ENCODE measurements at regions of chr11 and their contacts with region 1.

Region 1: GRCh38 chr11:35617687-35618496 is at the start of gene FJX1:
- DNase-seq: peak; percentile 17
- H3K4me3 ChIP-seq: peak within 1 kb of the TSS; percentile 44 to 52 (median 48)
- H3K27ac ChIP-seq: peak within 1 kb of the TSS; percentile 53 to 82 (median 72)
- H3K4me1 ChIP-seq: peaks cover 11 to 35% (median 21%) of the 10 kb centered on the region in 4 donors
- H3K27me3 ChIP-seq: peaks cover 82% of the 10 kb centered on the region
- CTCF ChIP-seq: no peak
- EP300 ChIP-seq: no peak
- POLR2A ChIP-seq: no peak
- total RNA-seq, gene FJX1: 0.14 to 2.6 (median 0.64) TPM in 3 of 4 donors, not detected in the other

Region 2: DNA sequence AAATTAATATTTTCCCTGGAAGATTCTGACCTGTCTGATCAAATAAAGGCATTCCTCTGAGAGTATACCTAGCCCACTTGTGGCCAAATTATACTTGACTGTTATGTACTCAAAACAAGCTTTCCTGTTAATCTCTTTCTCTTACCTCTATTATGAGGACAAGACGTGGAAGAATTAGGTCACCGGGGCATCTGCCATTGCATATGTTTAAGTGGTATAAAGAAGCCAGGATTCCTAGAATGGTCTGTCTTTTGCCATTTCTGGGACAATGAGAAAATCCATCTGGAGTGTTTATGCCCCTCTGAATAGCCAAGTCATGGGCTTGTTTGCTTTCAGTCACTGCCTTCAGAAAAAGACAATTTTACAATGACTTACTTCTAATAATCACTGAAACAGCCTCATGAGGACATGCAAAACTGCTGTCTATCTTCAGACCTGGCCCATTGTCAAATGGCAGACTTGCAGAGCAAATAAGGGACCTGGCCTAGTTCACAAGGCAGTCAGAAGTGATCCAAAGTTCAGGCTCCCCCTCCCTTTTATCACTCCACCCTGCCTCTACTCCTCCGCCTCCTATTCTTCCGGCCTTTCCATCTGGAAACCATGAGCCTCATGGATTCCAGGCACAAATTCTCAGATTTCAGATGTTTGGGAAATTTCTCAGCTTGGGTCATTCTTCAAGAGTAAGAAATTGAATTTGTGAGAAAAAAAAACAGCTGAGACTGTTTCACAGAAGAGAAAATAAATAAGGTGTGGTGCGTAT is 197.8 kb after region 1 on chr11:
- in situ Hi-C with region 1: loop called in 3 of 4 experiments (anchors 10 to 25 kb)
- intact Hi-C with region 1: loop called (anchors 5 kb)
- DNase-seq: no peak
- H3K4me3 ChIP-seq: no peak overlapping the region
- H3K27ac ChIP-seq: no peak overlapping the region
- H3K4me1 ChIP-seq: no peaks in the 10 kb centered on the region
- H3K27me3 ChIP-seq: no peaks in the 10 kb centered on the region
- CTCF ChIP-seq: no peak
- EP300 ChIP-seq: no peak
- POLR2A ChIP-seq: no peak

Region 3: DNA sequence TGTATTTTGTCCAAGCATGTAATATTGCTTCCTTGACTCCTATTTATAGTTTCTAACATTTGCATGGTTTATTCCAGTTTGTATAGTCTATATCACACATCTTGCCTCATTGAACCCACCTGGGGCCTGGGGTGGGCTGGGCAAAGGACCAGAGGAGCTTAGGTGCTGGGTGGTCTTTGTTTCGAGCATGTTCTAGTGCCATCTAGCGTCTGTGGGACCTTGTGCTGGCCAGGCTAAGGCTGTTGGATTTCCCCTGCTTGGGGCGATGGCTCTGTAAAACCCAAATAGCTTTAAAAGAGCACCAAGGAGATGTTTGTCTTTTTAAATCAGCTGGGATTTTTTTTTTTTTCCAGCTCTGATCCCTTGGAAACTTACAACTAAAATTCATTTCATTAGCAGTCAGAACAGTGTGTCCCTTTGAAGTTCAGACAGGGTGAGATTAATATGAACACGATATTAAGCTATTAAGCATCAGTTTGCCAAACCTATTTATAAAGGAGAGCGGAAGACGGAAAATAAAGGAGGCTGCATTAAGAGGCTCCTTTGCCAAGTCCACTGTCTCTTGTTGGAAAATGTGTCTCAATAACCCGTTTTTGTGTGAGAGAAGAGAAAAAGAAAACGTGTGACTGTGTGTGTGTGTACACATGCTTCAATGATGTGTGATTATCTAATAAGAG is 514.0 kb after region 1 on chr11:
- in situ Hi-C with region 1: loop called in 3 of 4 experiments (anchors 25 kb)
- intact Hi-C with region 1: loop called (anchors 10 kb)
- DNase-seq: peak; percentile 14
- H3K4me3 ChIP-seq: no peak overlapping the region
- H3K27ac ChIP-seq: no peak overlapping the region
- H3K4me1 ChIP-seq: no peaks in the 10 kb centered on the region
- H3K27me3 ChIP-seq: no peaks in the 10 kb centered on the region
- CTCF ChIP-seq: peak; percentile 16 to 43 (median 41)
- EP300 ChIP-seq: no peak
- POLR2A ChIP-seq: no peak

Region 4: DNA sequence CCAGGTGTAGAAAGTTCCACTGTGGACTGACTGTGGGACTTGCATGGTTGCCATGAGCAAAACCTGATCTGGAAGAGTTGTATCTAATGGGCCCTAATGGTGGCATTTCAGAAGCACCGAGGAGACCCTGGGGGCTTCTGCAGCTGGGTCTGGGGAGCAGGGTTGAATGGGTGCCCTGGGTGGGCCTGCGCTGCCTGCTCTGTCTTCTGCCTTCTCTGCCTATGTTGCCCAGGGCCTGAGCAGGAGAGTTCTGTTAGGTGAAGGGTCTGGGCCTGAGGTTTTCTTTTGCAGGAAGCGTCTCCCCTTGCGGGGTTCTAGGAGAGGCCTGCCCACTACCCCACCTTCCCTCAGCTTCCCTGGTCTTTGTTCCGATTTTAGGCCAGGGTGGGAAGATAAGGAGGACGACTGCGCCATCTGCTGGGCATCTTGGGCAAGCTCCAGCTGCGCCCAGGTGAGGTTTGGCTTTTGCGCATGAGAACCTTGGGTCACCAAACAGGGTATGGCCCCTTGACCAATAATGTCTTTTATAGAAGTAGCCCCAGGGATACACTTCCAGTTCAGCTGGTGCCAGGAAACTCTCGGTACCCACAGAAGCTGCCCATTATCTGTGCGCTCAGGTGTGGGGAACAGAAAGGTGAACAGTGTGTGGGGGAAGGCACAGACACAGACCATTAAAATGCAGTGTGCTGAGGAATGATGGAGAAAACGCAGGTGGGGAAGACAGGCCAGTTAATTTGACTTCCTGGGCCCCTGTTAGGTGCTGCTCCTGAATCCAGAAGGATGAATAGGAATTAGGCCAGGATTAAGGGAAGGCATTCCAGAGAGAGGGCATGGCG is 648.1 kb after region 1 on chr11:
- in situ Hi-C with region 1: loop called (anchors 5 to 25 kb)
- intact Hi-C with region 1: loop called (anchors 5 kb)
- DNase-seq: peak; percentile 46
- H3K4me3 ChIP-seq: no peak overlapping the region
- H3K27ac ChIP-seq: no peak overlapping the region
- H3K4me1 ChIP-seq: no peaks in the 10 kb centered on the region
- H3K27me3 ChIP-seq: peaks cover 3% of the 10 kb centered on the region
- CTCF ChIP-seq: peak; percentile 72 to 83 (median 77)
- EP300 ChIP-seq: no peak
- POLR2A ChIP-seq: no peak

Region 5: DNA sequence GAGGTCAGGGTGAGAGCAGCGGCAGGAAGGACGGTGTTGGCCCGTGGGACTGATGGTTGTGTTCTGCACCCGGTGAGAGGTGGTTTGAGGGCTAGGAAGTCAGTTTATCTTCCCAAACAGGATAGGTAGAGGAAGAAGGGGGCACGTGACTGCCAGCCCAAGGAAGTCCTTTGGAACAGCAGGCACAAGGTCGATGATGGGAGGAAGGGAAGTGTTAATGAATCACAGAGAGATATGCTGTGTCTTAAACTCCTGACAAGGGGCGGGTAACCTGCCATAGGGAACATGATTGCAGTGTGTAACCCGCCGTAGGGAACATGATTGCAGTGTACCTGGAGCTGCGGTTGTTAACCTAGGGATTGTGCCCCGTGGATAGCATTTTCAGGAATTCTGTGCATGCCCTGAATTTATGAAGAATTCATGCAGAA is 727.2 kb after region 1 on chr11:
- in situ Hi-C with region 1: no loop called
- intact Hi-C with region 1: no loop called
- DNase-seq: peak; percentile 75
- H3K4me3 ChIP-seq: no peak overlapping the region
- H3K27ac ChIP-seq: peak overlapping the region; percentile 79 to 87 (median 82)
- H3K4me1 ChIP-seq: peaks cover 0 to 21% (median 4%) of the 10 kb centered on the region in 4 donors
- H3K27me3 ChIP-seq: no peaks in the 10 kb centered on the region
- CTCF ChIP-seq: no peak
- EP300 ChIP-seq: no peak
- POLR2A ChIP-seq: peak; percentile 67